ENCODE measurements at regions of chr11 and their contacts with region 1.

Region 1: GRCh38 chr11:27698872-27699474 is 1.3 kb downstream of the BDNF start:
- H3K4me3 Mint-ChIP-seq: no peak overlapping the region
- H3K27ac Mint-ChIP-seq: no peak overlapping the region
- H3K4me1 Mint-ChIP-seq: peaks cover 24% of the 10 kb centered on the region
- H3K27me3 Mint-ChIP-seq: peaks cover 69% of the 10 kb centered on the region

Region 2: GRCh38 chr11:28529540-28530410 is 830.8 kb after region 1 on chr11:
- intact Hi-C with region 1: loop called (anchors 5 kb)
- H3K4me3 Mint-ChIP-seq: no peak overlapping the region
- H3K27ac Mint-ChIP-seq: no peak overlapping the region
- H3K4me1 Mint-ChIP-seq: no peaks in the 10 kb centered on the region
- H3K27me3 Mint-ChIP-seq: no peaks in the 10 kb centered on the region

Region 3: DNA sequence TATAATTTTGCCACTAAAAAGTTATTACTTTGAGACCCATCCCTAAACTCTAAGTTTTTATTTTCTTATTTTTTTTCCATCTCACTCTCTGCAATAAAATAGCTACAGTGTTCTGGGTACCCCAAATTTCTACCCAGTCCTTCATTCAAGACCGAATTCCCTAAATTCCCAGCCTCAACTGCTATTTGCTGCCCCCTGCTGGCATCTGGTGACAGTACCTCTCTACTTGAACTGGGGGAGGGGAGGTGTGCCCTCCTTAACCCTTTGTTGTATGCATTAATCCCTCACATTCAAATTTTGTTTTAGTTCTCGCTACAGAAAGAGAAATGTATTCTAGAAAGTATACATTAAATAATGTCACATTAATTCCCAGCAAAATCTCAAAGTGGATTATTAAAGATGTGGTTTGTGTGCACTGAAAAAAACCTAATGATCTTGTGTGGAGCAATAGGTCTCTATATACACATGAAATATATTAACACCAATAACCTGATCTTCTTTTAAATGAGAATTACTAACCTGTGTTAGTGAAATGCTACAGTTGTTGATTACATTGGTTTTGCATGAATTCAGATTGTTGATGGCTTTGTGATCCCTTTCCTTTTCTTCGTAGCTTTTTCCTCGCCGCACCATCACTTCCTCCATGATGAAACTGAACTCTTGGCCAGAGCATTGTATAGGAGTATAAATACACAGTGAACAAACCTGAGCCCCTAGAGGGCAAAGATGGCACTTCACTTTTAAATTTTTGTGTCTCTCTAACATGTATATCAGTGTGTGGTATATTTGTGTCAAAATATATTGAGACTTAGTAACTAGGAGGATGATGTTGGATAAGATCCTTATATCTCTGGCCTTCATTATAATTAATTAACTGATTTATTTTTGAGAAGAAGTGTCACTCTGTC is 999.2 kb after region 1 on chr11:
- intact Hi-C with region 1: loop called (anchors 2 kb)
- H3K4me3 Mint-ChIP-seq: no peak overlapping the region
- H3K27ac Mint-ChIP-seq: no peak overlapping the region
- H3K4me1 Mint-ChIP-seq: no peaks in the 10 kb centered on the region
- H3K27me3 Mint-ChIP-seq: no peaks in the 10 kb centered on the region

Region 4: GRCh38 chr11:29333993-29334775 is 1635.2 kb after region 1 on chr11:
- intact Hi-C with region 1: loop called (anchors 5 kb)
- H3K4me3 Mint-ChIP-seq: no peak overlapping the region
- H3K27ac Mint-ChIP-seq: no peak overlapping the region
- H3K4me1 Mint-ChIP-seq: no peaks in the 10 kb centered on the region
- H3K27me3 Mint-ChIP-seq: no peaks in the 10 kb centered on the region

Measured in dendritic cell treated with granulocyte-macrophage colony-stimulating factor and Interleukin-4, amounts not matched to agents 40 ng/mL and 50 ng/mL, for 4 days (primary cell).